ENCODE measurements at regions of chr6 and their contacts with region 1.

Region 1: DNA sequence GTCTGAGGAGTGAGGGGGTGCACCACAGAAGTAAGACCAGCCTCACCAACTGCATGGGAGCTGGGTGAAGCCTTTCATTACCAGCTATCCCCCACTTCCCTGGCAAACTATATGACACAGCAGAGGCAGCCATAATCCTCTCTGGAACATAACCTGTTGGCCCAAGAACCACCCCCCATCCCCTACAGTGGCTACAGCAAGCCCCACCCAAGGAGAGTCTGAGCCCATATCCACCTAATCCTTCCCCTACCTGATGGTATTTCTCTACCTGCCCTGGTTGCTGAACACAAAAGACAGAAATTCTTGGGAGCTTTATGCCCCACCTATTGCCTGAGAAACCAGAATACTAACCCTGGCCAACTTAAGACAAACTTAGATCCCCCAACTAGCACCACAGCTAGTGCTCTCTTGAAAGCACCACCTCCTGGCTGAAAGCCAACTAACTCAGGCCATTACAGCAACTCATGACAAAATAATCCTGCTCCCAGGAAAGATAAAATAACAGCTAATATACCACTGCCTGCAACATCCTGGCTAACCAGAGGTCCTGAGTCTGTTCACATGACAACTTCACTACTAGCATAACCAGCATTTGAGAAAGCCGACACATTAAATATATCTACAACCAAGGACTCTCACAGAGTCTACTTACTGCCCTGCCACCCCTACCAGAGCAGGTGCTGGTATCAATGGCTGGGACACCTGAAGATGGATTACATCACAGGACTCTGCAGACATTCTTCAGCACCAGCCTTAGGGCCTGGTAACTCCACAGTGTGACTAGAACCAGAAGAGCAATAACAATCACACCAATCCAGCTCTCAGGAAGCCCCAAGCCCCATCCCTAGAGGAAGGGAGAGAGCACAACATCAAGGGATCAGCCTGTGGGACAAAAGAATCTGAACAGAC is 11.1 kb downstream of the RNGTT start:
- DNase-seq: no peak
- ATAC-seq: no peak
- H3K4me3 ChIP-seq: no peak overlapping the region
- H3K27ac ChIP-seq: no peak overlapping the region
- H3K4me1 ChIP-seq: no peaks in the 10 kb centered on the region
- H3K27me3 ChIP-seq: no peaks in the 10 kb centered on the region
- CTCF ChIP-seq: no peak
- EP300 ChIP-seq: no peak
- POLR2A ChIP-seq: no peak
- RAD21 ChIP-seq: no peak

Region 2: DNA sequence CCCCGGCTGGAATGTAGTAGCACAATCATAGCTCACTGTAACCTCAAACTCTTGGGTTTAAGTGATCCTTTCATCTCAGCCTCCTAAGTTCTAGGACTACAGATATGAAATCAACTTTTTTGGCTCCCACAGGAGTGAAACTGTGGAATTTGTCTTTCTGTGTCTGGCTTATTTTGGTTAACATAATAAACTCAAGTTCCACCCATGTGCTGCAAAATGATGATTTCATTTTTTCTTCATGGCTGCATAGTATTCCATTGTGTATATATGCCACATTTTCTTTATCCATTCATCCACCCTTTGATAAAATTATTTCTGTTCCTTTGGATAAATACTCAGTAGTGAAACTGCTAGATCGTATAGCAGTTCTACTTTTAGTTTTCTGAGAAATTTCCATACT is 18.8 kb before region 1 on chr6:
- CTCF ChIA-PET with region 1: no interaction called
- POLR2A ChIA-PET with region 1: no interaction called
- RAD21 ChIA-PET with region 1: no interaction called
- SMC1A ChIA-PET with region 1: no interaction called
- in situ Hi-C with region 1: no loop called
- intact Hi-C with region 1: no loop called
- DNase-seq: no peak
- ATAC-seq: no peak
- H3K4me3 ChIP-seq: no peak overlapping the region
- H3K27ac ChIP-seq: no peak overlapping the region
- H3K4me1 ChIP-seq: no peaks in the 10 kb centered on the region
- H3K27me3 ChIP-seq: no peaks in the 10 kb centered on the region
- CTCF ChIP-seq: no peak
- EP300 ChIP-seq: no peak
- POLR2A ChIP-seq: no peak
- RAD21 ChIP-seq: no peak

Region 3: GRCh38 chr6:88963139-88964090 is 11.1 kb after region 1 on chr6 and contains the start of gene RNGTT:
- CTCF ChIA-PET with region 1: interaction called, 10 read pairs
- POLR2A ChIA-PET with region 1: no interaction called
- RAD21 ChIA-PET with region 1: interaction called, 5 read pairs
- SMC1A ChIA-PET with region 1: no interaction called
- in situ Hi-C with region 1: no loop called
- intact Hi-C with region 1: no loop called
- DNase-seq: peak; percentile 88
- ATAC-seq: peak; percentile 100
- H3K4me3 ChIP-seq: peak within 1 kb of the TSS; percentile 99
- H3K27ac ChIP-seq: peak within 1 kb of the TSS; percentile 80
- H3K4me1 ChIP-seq: no peaks in the 10 kb centered on the region
- H3K27me3 ChIP-seq: no peaks in the 10 kb centered on the region
- CTCF ChIP-seq: no peak
- EP300 ChIP-seq: no peak
- POLR2A ChIP-seq: peak; percentile 89
- RAD21 ChIP-seq: no peak
- polyA plus RNA-seq, gene RNGTT: 7.7 to 11.0 TPM

Region 4: DNA sequence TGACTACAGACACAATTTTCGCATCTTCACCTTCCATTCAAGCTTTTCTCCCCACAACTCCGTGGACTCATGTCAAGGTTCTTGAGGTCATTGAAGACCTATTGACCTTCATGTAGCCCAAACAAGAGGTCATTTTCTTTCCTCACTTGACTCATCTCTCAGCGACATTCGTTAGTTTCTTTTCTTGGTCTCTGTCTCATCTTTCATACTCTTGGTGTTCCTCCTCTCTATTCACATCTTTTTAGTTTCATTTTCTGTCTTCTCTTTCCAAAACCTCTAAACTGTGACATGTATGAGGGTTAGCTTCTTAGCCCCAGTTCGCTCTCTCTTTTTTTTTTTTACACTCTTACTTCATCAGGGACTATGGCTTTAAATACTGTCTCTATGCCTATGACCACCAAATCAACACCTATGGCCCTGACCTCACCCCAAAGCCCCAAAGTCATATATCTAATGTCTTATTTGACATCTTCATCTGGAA is 1472.9 kb after region 1 on chr6:
- CTCF ChIA-PET with region 1: no interaction called
- POLR2A ChIA-PET with region 1: interaction called, 10 read pairs
- RAD21 ChIA-PET with region 1: no interaction called
- SMC1A ChIA-PET with region 1: no interaction called
- in situ Hi-C with region 1: no loop called
- intact Hi-C with region 1: no loop called
- DNase-seq: peak; percentile 48
- ATAC-seq: peak; percentile 82
- H3K4me3 ChIP-seq: no peak overlapping the region
- H3K27ac ChIP-seq: no peak overlapping the region
- H3K4me1 ChIP-seq: peaks cover 10% of the 10 kb centered on the region
- H3K27me3 ChIP-seq: no peaks in the 10 kb centered on the region
- CTCF ChIP-seq: no peak
- EP300 ChIP-seq: no peak
- POLR2A ChIP-seq: no peak
- RAD21 ChIP-seq: no peak